Posterior vena cava (tissue), 2 donors: ENCODE measurements at regions of chr9 and their contacts with region 1.

Region 1: DNA sequence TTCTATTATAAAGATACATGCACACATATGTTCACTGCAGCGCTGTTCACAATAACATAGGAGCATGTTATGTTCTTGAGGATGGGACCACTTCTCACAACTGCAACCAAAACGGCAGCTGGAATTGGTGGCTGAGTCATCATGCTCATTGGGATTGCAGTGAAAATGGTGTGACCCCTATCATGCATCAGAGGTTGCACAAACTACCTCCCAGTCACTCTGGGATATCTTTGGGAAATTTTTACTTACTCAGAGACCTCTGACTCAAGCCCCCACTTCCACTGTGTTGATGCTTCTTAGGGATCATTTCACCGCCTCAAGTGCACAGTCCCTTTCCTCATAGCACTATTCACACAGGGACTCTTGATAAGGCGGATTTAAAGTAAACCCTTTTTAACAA is 474.1 kb downstream of the BNC2 start:
- DNase-seq: no peak

Region 2: GRCh38 chr9:15982182-15982581 is 414.2 kb before region 1 on chr9:
- intact Hi-C with region 1: no loop called
- DNase-seq: no peak

Region 3: DNA sequence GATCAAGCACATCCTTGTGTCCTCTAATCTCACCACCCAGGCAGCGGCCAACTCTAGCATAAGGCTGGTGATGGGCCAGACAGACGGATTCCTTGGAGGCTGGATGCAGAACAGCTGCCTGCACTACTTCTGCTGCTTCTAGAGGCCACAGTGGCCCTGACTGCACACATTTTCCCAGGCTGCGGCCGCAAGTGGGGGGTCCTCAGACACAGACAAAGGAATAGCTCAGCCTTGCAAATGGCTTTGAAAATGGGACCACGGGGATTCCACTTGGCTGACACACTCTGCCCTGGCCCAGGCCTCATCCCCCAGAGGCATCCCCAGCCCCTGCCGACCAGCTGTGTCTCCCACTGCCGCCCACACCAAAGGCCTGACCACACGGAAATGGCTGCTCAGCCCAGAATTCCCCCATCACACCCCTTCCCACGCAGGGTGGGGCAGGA is 66.7 kb before region 1 on chr9:
- intact Hi-C with region 1: loop called in 1 of 2 experiments (anchors 2 kb)
- DNase-seq: no peak